H1 (cell line): ENCODE measurements at regions of chr16 and their contacts with region 1.

Region 1: DNA sequence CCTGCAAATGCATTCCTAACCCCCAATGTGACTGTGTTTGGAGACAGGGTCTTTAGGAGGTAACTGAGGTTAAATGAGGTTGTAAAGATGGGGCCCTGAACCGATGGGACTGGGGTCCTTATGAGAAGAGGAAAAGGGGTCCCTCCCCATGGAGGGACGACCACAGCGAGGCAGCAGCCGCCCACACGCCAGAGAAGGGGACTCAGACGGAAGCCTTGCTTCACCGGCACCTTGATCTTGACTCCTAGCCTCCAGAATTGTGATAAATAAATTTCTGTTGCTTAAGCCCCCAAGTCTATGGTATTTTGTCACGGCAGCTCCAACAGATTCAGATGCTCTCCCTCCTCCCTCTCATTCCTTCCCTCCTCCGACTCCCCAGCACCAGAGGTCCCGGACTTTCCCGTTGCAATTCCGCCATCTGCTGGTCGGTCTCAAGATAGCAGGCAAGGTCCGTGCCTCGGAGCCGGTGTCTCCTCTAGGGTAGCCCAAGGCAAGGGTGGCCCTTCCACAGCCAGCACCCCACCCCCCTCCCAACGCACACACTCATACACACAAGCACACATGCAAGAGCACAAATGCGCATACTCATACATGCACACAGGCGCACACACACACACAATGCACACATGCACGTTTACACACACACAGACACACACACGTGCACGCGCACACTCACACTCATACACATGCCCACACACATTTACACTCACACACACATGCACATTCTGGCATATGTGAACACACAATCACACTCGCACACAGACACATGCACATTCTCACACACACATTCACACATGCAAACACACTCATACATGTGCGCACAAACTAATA is 23.1 kb upstream of the C16orf78 start:
- DNase-seq: peak in 1 of 2 experiments; percentile 94
- H3K4me3 ChIP-seq: no peak overlapping the region
- H3K27ac ChIP-seq: no peak overlapping the region
- H3K4me1 ChIP-seq: peaks cover 0 to 3% (median 0%) of the 10 kb centered on the region in 4 experiments; a peak in 1 of 7 replicates
- H3K27me3 ChIP-seq: no peaks in the 10 kb centered on the region
- CTCF ChIP-seq: peak; percentile 92 to 93 (median 92)
- EP300 ChIP-seq: no peak
- POLR2A ChIP-seq: no peak
- RAD21 ChIP-seq: peak; percentile 98 to 99

Region 2: DNA sequence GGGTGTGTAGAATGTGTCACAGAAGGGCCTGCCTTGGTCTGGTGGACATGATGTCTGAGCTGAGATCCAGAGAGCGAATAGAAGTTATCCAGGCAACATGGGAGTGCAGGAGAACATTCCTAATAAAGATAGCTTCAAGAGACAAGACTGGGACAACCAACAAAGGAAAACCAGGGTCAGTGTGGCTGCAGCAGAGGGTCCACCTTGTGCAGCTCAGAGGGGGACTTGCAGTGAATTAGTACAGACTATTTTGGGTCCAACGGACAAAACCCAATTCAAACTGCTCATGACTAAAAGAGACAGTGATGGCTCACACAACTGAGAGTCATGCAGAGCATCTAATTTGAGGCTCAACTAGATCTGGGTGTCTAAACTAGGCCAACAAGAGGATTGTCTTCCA is 260.9 kb before region 1 on chr16:
- CTCF ChIA-PET with region 1: interaction called, 15 read pairs
- POLR2A ChIA-PET with region 1: no interaction called
- DNase-seq: no peak
- H3K4me3 ChIP-seq: no peak overlapping the region
- H3K27ac ChIP-seq: no peak overlapping the region
- H3K4me1 ChIP-seq: no peaks in the 10 kb centered on the region
- H3K27me3 ChIP-seq: no peaks in the 10 kb centered on the region
- CTCF ChIP-seq: no peak
- EP300 ChIP-seq: no peak
- POLR2A ChIP-seq: no peak
- RAD21 ChIP-seq: no peak

Region 3: DNA sequence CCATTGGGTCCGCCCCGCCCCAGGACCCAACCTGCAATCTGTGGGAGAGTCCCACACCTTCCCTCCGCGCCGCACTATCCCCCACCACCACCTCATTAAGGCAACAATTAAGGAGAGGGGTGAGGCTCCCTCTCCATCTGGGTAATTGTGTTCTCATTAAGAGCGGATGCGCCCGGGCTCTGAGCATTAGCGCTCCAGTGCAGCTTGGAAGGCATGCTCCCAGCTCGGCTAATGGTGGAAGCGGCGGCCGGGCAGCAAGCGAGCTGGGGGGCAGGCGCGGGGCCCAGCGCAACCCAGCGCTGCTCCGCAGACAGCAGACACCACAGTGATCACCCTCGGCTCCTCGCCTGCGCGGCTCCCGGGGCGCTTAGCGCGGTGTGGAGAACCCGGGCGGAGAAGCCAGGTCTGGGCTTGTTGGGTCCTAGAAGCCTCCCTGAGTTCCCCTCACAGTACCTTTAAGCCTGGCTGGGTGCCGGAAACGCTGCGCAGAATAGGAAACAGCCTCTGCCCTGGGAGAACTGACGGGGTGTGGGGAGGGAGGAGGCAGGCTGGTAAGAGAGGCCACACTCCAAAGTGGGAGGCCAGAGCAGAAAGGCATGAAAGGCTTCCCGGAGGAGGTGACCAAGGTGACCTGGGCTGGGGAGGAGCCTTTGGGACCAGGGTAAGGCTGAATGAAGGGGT is 75.3 kb before region 1 on chr16:
- CTCF ChIA-PET with region 1: interaction called, 28 read pairs
- POLR2A ChIA-PET with region 1: no interaction called
- DNase-seq: peak in 1 of 2 experiments; percentile 72
- H3K4me3 ChIP-seq: peak overlapping the region; percentile 11 to 56 (median 18); a peak in 5 of 8 replicates
- H3K27ac ChIP-seq: no peak overlapping the region
- H3K4me1 ChIP-seq: peaks cover 2 to 23% (median 19%) of the 10 kb centered on the region in 4 experiments
- H3K27me3 ChIP-seq: peaks cover 70 to 84% (median 80%) of the 10 kb centered on the region in 4 experiments
- CTCF ChIP-seq: no peak
- EP300 ChIP-seq: no peak
- POLR2A ChIP-seq: no peak
- RAD21 ChIP-seq: no peak

Region 4: GRCh38 chr16:49305406-49305805 is 45.1 kb before region 1 on chr16:
- CTCF ChIA-PET with region 1: interaction called, 21 read pairs
- POLR2A ChIA-PET with region 1: no interaction called
- DNase-seq: no peak
- H3K4me3 ChIP-seq: no peak overlapping the region
- H3K27ac ChIP-seq: no peak overlapping the region
- H3K4me1 ChIP-seq: peaks cover 0 to 4% (median 0%) of the 10 kb centered on the region in 4 experiments; a peak in 1 of 7 replicates
- H3K27me3 ChIP-seq: no peaks in the 10 kb centered on the region
- CTCF ChIP-seq: no peak
- EP300 ChIP-seq: no peak
- POLR2A ChIP-seq: no peak
- RAD21 ChIP-seq: no peak

Region 5: GRCh38 chr16:49365711-49366509 is 15.4 kb after region 1 on chr16:
- CTCF ChIA-PET with region 1: interaction called, 10 read pairs
- POLR2A ChIA-PET with region 1: interaction called, 12 read pairs
- DNase-seq: no peak
- H3K4me3 ChIP-seq: no peak overlapping the region
- H3K27ac ChIP-seq: no peak overlapping the region
- H3K4me1 ChIP-seq: peaks cover 0 to 19% (median 8%) of the 10 kb centered on the region in 4 experiments; a peak in 4 of 7 replicates
- H3K27me3 ChIP-seq: no peaks in the 10 kb centered on the region; a peak in 1 of 7 replicates
- CTCF ChIP-seq: no peak
- EP300 ChIP-seq: no peak
- POLR2A ChIP-seq: no peak
- RAD21 ChIP-seq: no peak

Region 6: GRCh38 chr16:49463529-49463928 is 113.0 kb after region 1 on chr16:
- CTCF ChIA-PET with region 1: no interaction called
- POLR2A ChIA-PET with region 1: no interaction called
- DNase-seq: peak in 1 of 2 experiments; percentile 41
- H3K4me3 ChIP-seq: no peak overlapping the region
- H3K27ac ChIP-seq: no peak overlapping the region
- H3K4me1 ChIP-seq: peaks cover 0 to 3% (median 1%) of the 10 kb centered on the region in 4 experiments; a peak in 4 of 7 replicates
- H3K27me3 ChIP-seq: peaks cover 0 to 15% (median 12%) of the 10 kb centered on the region in 4 experiments; a peak in 6 of 7 replicates
- CTCF ChIP-seq: no peak
- EP300 ChIP-seq: no peak
- POLR2A ChIP-seq: no peak
- RAD21 ChIP-seq: no peak